Gastrocnemius medialis (tissue), 4 donors: ENCODE measurements at regions of chr15 and their contacts with region 1.

Region 1: DNA sequence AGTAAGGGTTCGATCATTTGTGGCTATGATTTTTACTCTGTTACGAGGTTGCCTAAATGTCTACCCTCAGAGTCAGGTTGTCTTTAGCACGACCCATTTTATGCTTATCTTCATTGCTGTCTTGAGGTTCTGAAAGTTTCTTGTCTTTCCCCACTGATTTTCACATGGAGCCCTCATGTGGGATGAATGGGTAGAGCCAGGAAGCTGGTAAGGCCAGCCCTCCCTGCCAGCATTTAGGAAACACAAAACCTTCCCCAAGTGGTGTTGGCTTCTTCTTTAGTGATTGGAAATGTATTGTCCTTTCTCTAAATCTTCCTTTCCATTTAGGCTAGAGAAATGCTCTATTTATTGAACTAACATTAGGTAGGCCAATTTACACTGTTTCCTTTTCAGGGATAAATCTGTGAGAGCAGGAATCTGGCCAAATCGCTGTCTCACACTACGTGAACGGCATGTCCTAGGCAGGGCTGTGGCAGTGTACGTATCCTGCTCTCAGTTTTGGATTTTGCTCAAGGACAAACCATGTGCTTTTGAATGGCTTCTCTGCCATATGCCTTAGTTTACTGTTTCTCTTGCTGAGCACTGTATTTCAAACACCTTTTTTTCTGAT is 43.7 kb downstream of the MYZAP start:
- DNase-seq: peak; percentile 81 to 83
- ATAC-seq: peak; percentile 92 to 93
- H3K4me3 ChIP-seq: no peak overlapping the region
- H3K27ac ChIP-seq: peak overlapping the region; percentile 79 to 92 (median 81)
- H3K4me1 ChIP-seq: peaks cover 22 to 32% of the 10 kb centered on the region in 2 donors
- H3K27me3 ChIP-seq: no peaks in the 10 kb centered on the region
- CTCF ChIP-seq: peak in 3 of 5 experiments; percentile 8 to 26 (median 21)
- POLR2A ChIP-seq: no peak

Region 2: DNA sequence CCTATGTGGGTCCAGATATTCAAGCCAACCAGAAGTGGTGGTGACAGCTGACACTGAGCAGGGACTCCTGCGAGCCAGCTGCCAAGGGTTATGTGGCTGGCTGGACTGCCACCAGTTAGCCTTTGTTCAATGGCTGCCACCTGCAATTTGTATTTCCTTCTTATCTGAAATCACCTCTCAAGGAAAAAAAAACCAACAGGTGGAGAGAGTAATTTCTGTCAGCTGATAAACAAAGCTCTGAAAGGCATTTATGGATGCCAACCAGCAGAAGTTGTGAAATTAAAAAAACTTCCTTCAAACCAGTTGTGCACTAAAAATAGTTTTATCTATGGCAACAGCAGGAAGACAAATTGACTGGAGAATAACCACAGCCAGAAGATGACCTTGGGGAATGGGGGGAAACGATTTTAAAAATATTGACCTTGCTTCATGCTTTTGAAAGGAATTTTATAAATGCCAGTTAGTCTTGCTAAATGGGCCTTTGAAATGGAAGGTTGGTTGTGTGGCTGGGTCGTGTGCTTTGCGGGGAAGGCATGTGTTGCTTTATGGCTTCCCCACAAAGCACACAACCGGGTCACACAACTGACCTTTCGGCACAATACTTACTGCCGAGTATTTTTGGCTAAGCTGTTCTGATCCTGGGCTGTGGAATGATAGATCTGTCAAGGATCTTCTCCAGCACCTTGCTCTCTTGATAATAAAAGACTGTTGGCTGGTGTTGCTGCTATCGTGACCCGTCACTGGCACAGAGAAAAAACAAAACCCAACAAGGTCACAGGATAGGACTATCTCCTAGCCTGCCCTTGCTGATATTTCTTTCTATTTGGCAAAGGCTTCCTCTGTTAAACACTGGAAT is 40.2 kb before region 1 on chr15:
- in situ Hi-C with region 1: no loop called
- intact Hi-C with region 1: loop called (anchors 2 kb)
- DNase-seq: peak in 1 of 2 donors; percentile 39
- ATAC-seq: peak; percentile 62 to 66
- H3K4me3 ChIP-seq: no peak overlapping the region
- H3K27ac ChIP-seq: peak overlapping the region; percentile 47 to 75 (median 59)
- H3K4me1 ChIP-seq: peaks cover 17 to 33% of the 10 kb centered on the region in 2 donors
- H3K27me3 ChIP-seq: no peaks in the 10 kb centered on the region
- CTCF ChIP-seq: no peak
- POLR2A ChIP-seq: no peak

Region 3: GRCh38 chr15:57706405-57707209 is 71.2 kb after region 1 on chr15 and contains the start of gene POLR2M:
- in situ Hi-C with region 1: no loop called
- intact Hi-C with region 1: loop called (anchors 2 kb)
- DNase-seq: peak; percentile 88 to 95
- ATAC-seq: peak; percentile 94 to 97
- H3K4me3 ChIP-seq: peak within 1 kb of the TSS; percentile 69 to 97 (median 88)
- H3K27ac ChIP-seq: peak within 1 kb of the TSS; percentile 90 to 96 (median 94)
- H3K4me1 ChIP-seq: peaks cover 28% of the 10 kb centered on the region in 2 donors
- H3K27me3 ChIP-seq: no peaks in the 10 kb centered on the region
- CTCF ChIP-seq: no peak
- POLR2A ChIP-seq: peak; percentile 77 to 80
- total RNA-seq, gene POLR2M: 40.3 to 145 (median 79.5) TPM